ENCODE measurements at regions of chr2 and their contacts with region 1.

Region 1: DNA sequence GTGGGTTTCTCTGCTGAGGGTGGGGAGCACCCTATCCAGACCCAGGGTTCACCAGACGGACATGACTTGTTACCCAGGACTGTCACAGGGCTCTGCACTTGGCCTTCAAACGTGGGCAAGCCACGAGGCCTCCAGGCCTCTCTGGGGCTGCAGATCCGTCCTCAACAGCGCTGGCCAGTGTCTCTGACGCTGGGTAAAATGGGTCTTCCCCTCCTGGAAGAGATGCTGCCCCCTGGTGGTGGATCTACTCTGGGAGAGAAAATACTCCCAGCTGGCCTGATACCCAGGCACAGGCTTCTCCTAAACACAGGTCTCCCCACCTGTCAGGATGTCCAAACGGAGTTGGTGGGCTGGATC is 3.7 kb downstream of the GPR17 start:
- DNase-seq: peak; percentile 91

Region 2: DNA sequence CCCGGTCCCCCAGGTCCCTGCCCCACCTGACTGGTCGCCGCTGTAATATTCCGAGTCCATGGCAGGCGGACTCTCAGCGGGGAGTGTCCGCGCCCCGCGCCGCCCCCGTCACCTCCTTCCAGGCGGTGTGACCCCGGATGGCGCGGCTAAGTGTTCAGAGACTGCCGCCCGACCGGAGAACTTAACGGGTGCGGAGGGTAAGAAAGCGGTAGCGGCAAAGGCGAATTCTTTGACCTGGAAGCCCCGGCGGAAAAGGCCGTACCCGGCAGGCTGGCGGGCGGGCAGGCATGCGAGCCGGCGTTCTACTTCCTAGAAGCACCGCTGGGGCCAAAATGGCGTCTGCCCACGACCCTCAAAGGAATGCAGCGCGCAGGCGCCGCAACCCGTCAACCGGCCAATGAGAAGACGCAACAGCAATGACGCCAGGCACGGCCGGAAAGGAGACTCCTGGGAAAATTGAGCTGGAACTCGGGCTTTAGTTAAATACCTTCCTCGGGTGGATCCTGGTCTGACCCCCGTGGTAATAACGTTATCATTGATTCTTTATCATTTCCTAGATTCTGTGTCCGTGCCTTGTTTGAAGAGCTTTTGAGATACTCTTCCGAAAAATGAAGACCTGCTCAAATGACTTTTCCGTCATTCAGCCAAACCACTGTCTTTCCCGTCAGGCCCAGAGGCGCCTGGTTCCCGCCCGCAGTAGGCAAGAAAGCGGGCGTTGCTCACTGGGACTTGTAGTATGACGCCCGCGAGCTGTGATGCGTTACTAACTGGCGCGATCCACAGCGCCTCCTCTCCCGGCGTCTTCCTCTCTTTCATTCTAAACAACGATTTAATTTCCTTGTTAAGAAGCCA is 123.3 kb before region 1 on chr2 and contains the start of gene IWS1:
- intact Hi-C with region 1: loop called (anchors 5 kb)
- DNase-seq: peak; percentile 97
- total RNA-seq, gene IWS1: 40.7 TPM

Region 3: GRCh38 chr2:127681288-127681804 is 31.7 kb after region 1 on chr2:
- intact Hi-C with region 1: loop called (anchors 5 kb)
- DNase-seq: no peak

Measured in cardiac septum (tissue), 1 donor.